Activated CD4-positive, alpha-beta T cell treated with anti-CD3 and anti-CD28 coated beads, Interleukin-2, amount 10 ng/mL, durations not matched to agents 24 days and 14 days (primary cell): ENCODE measurements at regions of chr10 and their contacts with region 1.

Region 1: GRCh38 chr10:29409241-29410057 is 120.6 kb downstream of the LYZL1 start:
- DNase-seq: peak; percentile 84
- H3K4me3 Mint-ChIP-seq: peak overlapping the region; percentile 98
- H3K27ac Mint-ChIP-seq: peak overlapping the region; percentile 89
- H3K4me1 Mint-ChIP-seq: peaks cover 24% of the 10 kb centered on the region
- H3K27me3 Mint-ChIP-seq: no peaks in the 10 kb centered on the region

Region 2: DNA sequence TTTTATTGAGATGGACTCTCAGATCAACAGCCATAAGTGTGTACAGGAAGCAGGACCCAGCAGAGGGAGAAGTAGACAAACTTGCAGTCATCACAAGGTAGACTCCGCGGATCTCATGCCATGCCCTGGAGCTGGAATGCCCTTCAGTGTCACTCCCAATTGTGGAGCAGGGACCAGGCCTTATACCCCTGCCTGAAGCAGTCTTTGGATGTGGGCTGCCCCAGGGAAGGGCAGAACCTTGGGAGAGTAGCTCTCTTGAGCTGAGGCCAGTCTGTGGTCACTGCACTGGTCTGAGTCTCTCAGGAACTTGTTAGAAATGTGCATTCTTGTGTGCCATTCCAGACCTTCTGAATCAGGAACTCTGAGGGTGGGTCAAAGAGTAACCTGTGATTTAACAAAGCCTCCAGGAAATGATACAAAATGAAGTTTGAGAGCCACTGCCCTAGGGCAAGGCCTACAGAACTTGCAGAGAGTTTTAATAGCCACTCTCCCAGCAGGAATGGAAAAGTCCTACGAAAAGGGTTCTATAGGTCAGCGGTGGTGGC is 52.6 kb before region 1 on chr10:
- intact Hi-C with region 1: no loop called
- DNase-seq: no peak
- H3K4me3 Mint-ChIP-seq: no peak overlapping the region
- H3K27ac Mint-ChIP-seq: no peak overlapping the region
- H3K4me1 Mint-ChIP-seq: no peaks in the 10 kb centered on the region
- H3K27me3 Mint-ChIP-seq: peaks cover 3% of the 10 kb centered on the region

Region 3: DNA sequence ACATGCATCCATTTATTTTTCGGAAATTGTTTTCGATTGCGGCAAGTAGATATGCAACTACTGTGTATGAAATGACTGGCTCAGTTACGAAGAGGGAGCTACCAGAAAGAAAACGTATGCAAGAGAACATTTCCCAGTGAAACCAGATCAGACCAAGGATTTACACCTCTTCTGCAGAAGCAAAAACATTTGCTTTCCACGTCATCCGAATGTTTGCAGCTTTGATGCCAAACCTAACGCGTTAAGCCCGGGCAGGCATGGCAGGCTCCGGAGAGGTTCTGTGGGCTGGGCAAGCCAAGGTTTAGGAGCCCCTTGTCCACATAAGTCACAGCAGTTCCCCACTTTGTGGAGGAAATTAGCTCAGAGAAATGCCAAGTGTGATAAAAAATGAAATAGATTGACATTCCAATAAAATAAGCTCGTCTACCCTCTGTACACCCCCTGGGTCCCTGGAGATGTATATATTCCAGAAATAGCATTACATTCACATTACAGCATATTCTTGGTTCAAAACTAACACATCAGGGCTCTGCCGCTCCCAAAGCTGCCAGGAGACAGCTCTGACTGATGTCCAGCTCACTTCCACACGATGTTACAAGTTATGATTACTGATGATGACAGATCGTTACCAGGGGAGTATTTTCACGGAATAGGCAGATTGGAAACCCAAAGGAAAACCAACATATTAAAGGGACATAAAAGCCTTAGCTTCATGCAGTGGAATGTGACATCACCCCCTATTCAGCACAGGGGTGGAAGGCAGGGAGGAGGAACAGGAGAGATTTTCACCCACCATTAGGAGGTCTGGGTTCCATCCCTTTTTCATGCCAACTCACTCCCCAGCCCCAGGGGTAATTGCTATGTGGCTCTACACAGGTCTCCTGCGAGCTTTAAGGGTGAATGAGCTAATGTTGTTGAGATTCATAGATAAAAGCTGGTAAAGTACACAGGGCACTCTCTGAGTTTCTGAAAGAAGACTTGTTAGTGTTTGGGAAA is 39.1 kb before region 1 on chr10:
- intact Hi-C with region 1: no loop called
- DNase-seq: no peak
- H3K4me3 Mint-ChIP-seq: no peak overlapping the region
- H3K27ac Mint-ChIP-seq: no peak overlapping the region
- H3K4me1 Mint-ChIP-seq: no peaks in the 10 kb centered on the region
- H3K27me3 Mint-ChIP-seq: peaks cover 11% of the 10 kb centered on the region

Region 4: GRCh38 chr10:29692121-29692539 is 282.7 kb after region 1 on chr10:
- intact Hi-C with region 1: no loop called
- DNase-seq: no peak
- H3K4me3 Mint-ChIP-seq: no peak overlapping the region
- H3K27ac Mint-ChIP-seq: no peak overlapping the region
- H3K4me1 Mint-ChIP-seq: peaks cover 12% of the 10 kb centered on the region
- H3K27me3 Mint-ChIP-seq: peaks cover 3% of the 10 kb centered on the region

Region 5: DNA sequence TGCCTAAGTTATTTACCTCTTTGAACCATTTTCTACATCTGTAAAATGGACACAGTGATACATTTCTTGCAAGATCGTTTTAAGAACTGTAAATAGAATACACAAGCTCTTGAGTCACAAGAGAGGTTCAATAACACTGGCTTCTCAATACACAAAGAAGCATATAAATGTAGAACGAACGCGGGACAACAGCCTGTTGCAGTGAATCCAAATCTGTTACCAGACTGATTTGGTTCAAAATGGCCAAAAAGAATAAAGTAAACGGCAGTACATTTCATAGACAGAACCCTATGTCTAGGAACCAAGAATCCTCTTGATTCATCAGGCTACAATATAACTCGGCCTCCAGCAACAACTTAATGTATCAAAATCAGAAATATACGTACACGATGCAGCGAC is 938.9 kb after region 1 on chr10:
- intact Hi-C with region 1: loop called (anchors 5 kb)
- DNase-seq: no peak
- H3K4me3 Mint-ChIP-seq: peak overlapping the region; percentile 90
- H3K27ac Mint-ChIP-seq: peak overlapping the region; percentile 93
- H3K4me1 Mint-ChIP-seq: peaks cover 34% of the 10 kb centered on the region
- H3K27me3 Mint-ChIP-seq: peaks cover under 1% of the 10 kb centered on the region